Activated CD4-positive, alpha-beta T cell treated with anti-CD3 and anti-CD28 coated beads for 36 hours (primary cell): ENCODE measurements at regions of chr2 and their contacts with region 1.

Region 1: GRCh38 chr2:73736855-73737779 is at the start of gene TPRKB:
- DNase-seq: peak; percentile 98
- ATAC-seq: peak; percentile 99
- H3K4me3 Mint-ChIP-seq: peak within 1 kb of the TSS; percentile 92
- H3K27ac Mint-ChIP-seq: peak within 1 kb of the TSS; percentile 94
- H3K4me1 Mint-ChIP-seq: peaks cover 14% of the 10 kb centered on the region
- H3K27me3 Mint-ChIP-seq: no peaks in the 10 kb centered on the region
- total RNA-seq, gene TPRKB: 23.3 to 35.3 TPM

Region 2: GRCh38 chr2:73284296-73285158 is 452.6 kb before region 1 on chr2 and contains the start of gene FBXO41:
- CTCF ChIA-PET with region 1: no interaction called
- POLR2A ChIA-PET with region 1: no interaction called
- intact Hi-C with region 1: loop called in 1 of 2 experiments (anchors 1 kb)
- DNase-seq: peak; percentile 86
- ATAC-seq: peak; percentile 85
- H3K4me3 Mint-ChIP-seq: peak within 1 kb of the TSS; percentile 78
- H3K27ac Mint-ChIP-seq: peak within 1 kb of the TSS; percentile 75
- H3K4me1 Mint-ChIP-seq: peaks cover 15% of the 10 kb centered on the region
- H3K27me3 Mint-ChIP-seq: peaks cover 19% of the 10 kb centered on the region
- total RNA-seq, gene FBXO41: 27.7 to 29.5 TPM

Region 3: DNA sequence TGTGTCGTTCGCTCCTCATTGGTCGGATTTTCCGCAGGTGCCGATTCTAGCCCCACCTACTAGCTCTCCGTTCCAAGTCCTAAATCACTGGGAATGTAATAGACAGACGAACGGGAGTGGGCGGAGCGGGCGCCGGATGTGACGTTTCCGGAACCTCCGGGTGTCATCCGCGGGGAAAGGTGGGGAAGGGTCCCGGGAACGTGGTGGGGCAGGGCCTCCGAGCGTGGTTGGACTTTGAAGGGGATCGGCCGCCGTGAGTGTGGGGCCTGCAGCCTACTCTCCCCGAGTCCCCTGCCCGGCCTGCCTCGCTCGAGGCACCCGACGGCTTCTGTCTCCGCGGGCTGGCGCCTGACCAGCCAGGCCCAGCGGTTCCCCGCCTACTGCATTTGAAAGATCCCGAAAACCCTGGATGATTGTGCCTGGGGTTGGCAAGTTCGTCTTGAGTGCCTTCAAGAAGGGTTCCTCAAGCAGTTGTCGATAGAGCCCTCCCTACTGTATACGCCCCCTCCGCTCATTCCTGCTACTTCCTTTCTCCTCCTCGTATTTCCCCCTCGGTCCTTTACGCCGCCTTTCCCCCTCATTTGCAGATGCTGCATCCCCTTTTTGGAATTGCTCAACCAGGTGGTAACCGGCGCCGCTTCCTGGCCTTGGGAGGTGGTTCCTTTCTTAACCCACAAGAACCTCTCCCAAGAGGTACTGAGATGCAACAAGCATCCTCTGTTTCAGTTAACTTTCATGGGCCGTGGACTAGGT is 91.9 kb after region 1 on chr2 and contains the start of gene STAMBP:
- CTCF ChIA-PET with region 1: interaction called, 4 read pairs
- POLR2A ChIA-PET with region 1: no interaction called
- intact Hi-C with region 1: loop called (anchors 1 kb)
- DNase-seq: peak; percentile 95
- ATAC-seq: peak; percentile 75
- H3K4me3 Mint-ChIP-seq: peak within 1 kb of the TSS; percentile 97
- H3K27ac Mint-ChIP-seq: peak within 1 kb of the TSS; percentile 98
- H3K4me1 Mint-ChIP-seq: peaks cover 53% of the 10 kb centered on the region
- H3K27me3 Mint-ChIP-seq: no peaks in the 10 kb centered on the region
- total RNA-seq, gene STAMBP: 104 to 111 TPM

Region 4: GRCh38 chr2:74147727-74148456 is 410.8 kb after region 1 on chr2 and contains the start of gene BOLA3:
- CTCF ChIA-PET with region 1: no interaction called
- POLR2A ChIA-PET with region 1: interaction called, 3 read pairs
- intact Hi-C with region 1: loop called in 1 of 2 experiments (anchors 1 kb)
- DNase-seq: peak; percentile 94
- ATAC-seq: peak; percentile 94
- H3K4me3 Mint-ChIP-seq: no peak within 1 kb of the TSS
- H3K27ac Mint-ChIP-seq: no peak within 1 kb of the TSS
- H3K4me1 Mint-ChIP-seq: peaks cover 5% of the 10 kb centered on the region
- H3K27me3 Mint-ChIP-seq: no peaks in the 10 kb centered on the region
- total RNA-seq, gene BOLA3: 119 to 130 TPM

Region 5: DNA sequence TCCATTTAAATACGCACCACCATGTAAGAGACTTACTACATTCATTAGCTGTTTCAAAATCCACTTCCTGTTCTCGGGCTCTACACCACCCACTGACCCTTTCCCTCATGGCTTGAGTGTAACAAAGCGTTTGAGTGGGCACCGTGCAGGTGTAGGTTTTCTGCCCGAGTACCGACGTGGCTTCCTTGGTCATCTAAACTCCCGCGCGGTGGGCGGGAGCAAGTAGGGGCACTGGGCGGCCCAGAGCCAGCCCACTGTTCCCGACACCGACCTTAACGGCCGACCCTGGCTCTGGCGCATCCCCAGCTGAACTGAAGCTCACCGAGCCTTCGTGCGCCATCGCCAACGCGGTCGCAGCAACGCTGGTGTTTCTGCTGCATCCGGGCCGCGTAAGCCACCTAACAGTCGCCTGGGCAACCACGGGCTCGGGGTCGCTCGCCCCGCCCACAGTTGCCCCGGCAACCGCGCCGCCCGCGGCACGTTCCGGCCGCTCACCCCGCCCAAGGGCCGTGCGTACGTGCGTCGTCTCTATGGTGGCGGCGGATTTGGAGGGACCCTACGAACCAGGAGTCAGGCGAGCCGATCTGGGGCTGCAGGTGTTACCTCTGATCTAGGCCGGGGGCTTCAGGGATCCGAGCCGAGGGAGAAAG is 684.2 kb after region 1 on chr2 and contains the starts of genes C2orf81 and WDR54:
- CTCF ChIA-PET with region 1: no interaction called
- POLR2A ChIA-PET with region 1: no interaction called
- intact Hi-C with region 1: loop called in 1 of 2 experiments (anchors 1 kb)
- DNase-seq: peak; percentile 97
- ATAC-seq: peak; percentile 92
- H3K4me3 Mint-ChIP-seq: peak within 1 kb of the TSS; percentile 91
- H3K27ac Mint-ChIP-seq: peak within 1 kb of the TSS; percentile 98
- H3K4me1 Mint-ChIP-seq: peaks cover 34% of the 10 kb centered on the region
- H3K27me3 Mint-ChIP-seq: no peaks in the 10 kb centered on the region
- total RNA-seq, gene C2orf81: 4.5 to 4.9 TPM
- total RNA-seq, gene WDR54: 103 to 119 TPM

Region 6: DNA sequence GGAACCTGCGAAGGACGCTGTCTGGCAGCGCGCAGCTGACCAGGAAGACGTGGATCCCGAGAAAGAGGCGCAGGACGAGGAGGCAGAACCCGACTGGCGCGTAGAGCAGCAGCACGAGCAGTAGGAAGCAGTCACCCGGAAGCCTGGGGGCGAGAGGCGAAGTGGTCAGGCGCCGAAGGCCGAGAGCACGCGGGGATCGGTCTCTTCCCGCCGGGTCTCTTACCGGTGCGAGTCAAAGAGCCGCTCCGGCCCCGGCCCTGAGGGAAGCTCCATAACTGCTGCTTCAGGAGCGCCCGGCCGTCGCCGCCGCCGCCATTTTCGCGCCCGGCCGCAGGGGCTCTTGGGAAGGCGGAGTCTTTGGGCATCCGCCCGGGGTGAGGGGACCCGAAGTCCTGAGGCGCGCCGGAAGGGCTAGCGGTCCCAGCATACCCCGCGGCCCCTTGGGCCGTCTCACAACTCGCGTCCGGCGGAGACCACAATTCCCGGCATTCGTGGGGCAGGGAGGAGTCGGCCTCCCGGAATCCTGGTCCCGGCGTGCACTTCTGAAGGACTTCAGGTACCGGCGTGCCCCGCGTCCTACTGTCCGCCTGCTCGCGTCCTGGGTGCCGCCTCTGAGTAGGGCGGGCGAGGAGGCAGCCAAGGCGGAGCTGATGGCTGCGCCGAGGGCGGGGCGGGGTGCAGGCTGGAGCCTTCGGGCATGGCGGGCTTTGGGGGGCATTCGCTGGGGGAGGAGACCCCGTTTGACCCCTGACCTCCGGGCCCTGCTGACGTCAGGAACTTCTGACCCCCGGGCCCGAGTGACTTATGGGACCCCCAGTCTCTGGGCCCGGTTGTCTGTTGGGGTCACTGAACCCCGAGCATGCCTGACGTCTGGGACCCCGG is 792.5 kb after region 1 on chr2 and contains the starts of genes AUP1 and HTRA2:
- CTCF ChIA-PET with region 1: no interaction called
- POLR2A ChIA-PET with region 1: no interaction called
- intact Hi-C with region 1: loop called in 1 of 2 experiments (anchors 1 kb)
- DNase-seq: peak; percentile 97
- ATAC-seq: peak; percentile 90
- H3K4me3 Mint-ChIP-seq: peak within 1 kb of the TSS; percentile 100
- H3K27ac Mint-ChIP-seq: peak within 1 kb of the TSS; percentile 98
- H3K4me1 Mint-ChIP-seq: peaks cover 35% of the 10 kb centered on the region
- H3K27me3 Mint-ChIP-seq: no peaks in the 10 kb centered on the region
- total RNA-seq, gene AUP1: 92.0 to 122 TPM
- total RNA-seq, gene HTRA2: 43.5 to 47.7 TPM